ENCODE measurements at regions of chr17 and their contacts with region 1.

Region 1: GRCh38 chr17:72725433-72726068 is 366.9 kb downstream of the SLC39A11 start:
- DNase-seq: no peak
- H3K4me3 ChIP-seq: no peak overlapping the region
- CTCF ChIP-seq: peak; percentile 90

Region 2: DNA sequence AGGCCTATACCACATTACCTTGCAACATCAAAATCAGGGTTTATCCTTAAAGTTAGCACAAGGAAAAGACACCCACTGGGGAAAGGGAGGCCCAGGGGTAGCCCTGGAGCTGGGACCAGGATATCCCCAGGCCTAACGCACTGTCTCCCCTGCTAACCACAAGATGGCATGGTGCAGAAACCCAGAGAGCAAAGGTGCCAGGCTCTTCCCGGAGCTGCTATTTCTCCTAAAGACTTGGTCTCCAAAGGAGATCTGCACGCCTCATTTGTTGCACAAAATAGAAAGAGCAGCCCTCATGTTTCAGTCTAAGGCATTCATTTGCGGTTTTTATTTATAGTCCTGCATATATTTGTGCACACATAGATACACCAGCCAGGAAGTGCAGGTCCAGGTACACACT is 196.2 kb before region 1 on chr17:
- CTCF ChIA-PET with region 1: no interaction called
- POLR2A ChIA-PET with region 1: no interaction called
- DNase-seq: no peak
- H3K4me3 ChIP-seq: no peak overlapping the region
- CTCF ChIP-seq: no peak

Region 3: GRCh38 chr17:72569148-72569946 is 156.2 kb before region 1 on chr17:
- CTCF ChIA-PET with region 1: interaction called, 350 read pairs
- POLR2A ChIA-PET with region 1: no interaction called
- DNase-seq: no peak
- H3K4me3 ChIP-seq: no peak overlapping the region
- CTCF ChIP-seq: no peak

Region 4: GRCh38 chr17:72677108-72677507 is 48.4 kb before region 1 on chr17:
- CTCF ChIA-PET with region 1: no interaction called
- POLR2A ChIA-PET with region 1: no interaction called
- DNase-seq: no peak
- H3K4me3 ChIP-seq: no peak overlapping the region
- CTCF ChIP-seq: no peak

Region 5: DNA sequence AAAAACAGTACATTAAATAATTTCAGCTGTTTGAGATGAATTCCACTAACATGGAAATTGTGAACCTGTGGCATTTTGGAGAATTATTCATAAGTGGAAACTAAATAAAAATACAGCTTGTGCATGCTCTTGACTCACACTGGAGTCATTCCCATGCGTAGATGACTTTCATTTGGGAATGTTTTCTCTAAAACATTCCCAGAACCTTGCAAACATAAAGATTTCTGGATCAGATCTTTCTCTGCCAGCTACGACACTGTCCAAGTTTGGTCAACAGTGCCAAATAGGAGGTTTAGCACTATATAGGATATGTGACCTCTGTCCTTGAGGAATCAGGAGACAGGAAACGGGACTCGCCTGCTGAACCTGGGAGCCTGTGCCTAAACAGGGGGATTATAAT is 34.0 kb before region 1 on chr17:
- CTCF ChIA-PET with region 1: interaction called, 16 read pairs
- POLR2A ChIA-PET with region 1: no interaction called
- DNase-seq: peak; percentile 91
- H3K4me3 ChIP-seq: no peak overlapping the region
- CTCF ChIP-seq: no peak

Region 6: DNA sequence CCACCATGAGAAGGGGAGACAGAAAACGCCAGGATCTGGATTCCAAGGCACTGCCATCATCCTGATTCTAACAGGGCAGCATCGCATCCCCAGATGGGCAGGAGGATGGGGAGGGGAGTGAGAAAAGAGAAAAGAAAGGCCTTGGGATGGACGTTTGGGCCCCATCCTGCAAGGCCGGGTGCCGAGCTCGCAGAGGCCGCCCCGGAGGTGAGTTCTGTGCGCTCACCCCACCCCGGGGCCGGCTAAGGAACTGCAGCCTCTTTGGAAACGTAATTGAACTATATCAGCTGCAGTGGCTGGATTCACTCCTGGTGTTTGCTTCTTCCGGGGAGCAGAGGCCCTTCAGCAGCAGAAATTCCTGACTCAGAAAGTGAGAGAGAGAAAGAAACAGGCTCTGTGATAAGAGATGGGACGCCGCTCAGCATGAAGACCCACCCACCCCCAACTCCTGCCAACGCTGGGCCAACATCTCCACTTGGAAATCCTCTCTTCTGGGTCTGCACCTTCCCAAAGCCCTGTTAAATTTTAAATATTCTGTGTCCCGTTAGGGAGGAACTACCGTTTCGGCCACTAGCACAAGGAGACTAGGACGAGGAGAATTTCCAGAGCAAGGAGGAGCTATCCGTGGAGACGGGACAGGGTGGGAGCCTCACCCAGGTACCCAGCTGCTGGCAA is 430.8 kb after region 1 on chr17:
- CTCF ChIA-PET with region 1: interaction called, 100 read pairs
- POLR2A ChIA-PET with region 1: no interaction called
- DNase-seq: no peak
- H3K4me3 ChIP-seq: no peak overlapping the region
- CTCF ChIP-seq: peak; percentile 80

Region 7: GRCh38 chr17:73192894-73193701 is 467.5 kb after region 1 on chr17 and contains the start of gene COG1:
- CTCF ChIA-PET with region 1: interaction called, 551 read pairs
- POLR2A ChIA-PET with region 1: interaction called, 3 read pairs
- DNase-seq: no peak
- H3K4me3 ChIP-seq: peak within 1 kb of the TSS; percentile 93
- CTCF ChIP-seq: no peak

Region 8: GRCh38 chr17:73231841-73232586 is 506.5 kb after region 1 on chr17:
- CTCF ChIA-PET with region 1: interaction called, 44 read pairs
- POLR2A ChIA-PET with region 1: no interaction called
- DNase-seq: peak; percentile 51
- H3K4me3 ChIP-seq: peak overlapping the region; percentile 93
- CTCF ChIP-seq: no peak

Measured in AG04449 (cell line).